CD8-positive, alpha-beta T cell (primary cell): ENCODE measurements at regions of chr16 and their contacts with region 1.

Region 1: DNA sequence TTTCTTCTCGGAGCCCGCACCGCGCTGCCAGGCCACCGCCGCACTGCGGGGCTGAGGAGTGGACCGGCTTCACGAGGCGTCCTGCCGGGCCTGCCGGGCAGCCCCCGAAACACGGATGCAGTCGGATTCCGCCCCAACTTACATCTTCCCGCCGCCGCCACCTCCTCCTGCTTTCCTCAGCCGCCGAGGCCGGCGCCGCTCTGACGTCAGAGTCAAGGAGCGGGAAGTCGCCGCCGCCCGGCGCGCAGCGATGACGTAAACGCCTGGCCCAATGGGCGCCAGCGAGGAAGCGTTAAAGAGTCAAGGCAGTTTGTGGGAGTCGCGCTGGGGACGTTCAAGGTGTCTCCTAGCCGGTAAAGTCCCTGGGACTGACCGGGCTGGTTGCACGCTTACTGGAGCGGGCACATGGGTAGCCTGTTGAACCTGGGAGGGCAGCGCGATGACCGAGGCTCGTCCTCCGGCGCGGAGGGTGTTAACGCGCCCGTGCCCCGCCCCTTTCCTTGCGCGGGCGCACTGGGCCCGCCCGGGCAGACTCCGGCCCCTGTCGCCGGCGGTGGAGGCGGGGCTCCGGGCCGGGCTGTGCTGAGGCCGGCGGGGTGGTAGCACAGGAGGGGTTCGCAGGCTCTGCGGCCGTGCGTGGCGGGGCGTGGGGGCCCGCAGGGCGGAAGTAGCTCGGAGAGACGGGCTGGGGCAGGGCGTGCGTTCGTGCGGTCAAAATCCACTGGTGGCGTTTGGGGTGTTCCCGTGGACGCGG is at the start of gene RNPS1:
- DNase-seq: peak; percentile 90 to 99 (median 97)
- ATAC-seq: peak; percentile 81
- H3K4me3 ChIP-seq: peak within 1 kb of the TSS; percentile 94 to 100
- H3K4me3 Mint-ChIP-seq: peak within 1 kb of the TSS; percentile 96
- H3K27ac ChIP-seq: peak within 1 kb of the TSS; percentile 96 to 99
- H3K27ac Mint-ChIP-seq: peak within 1 kb of the TSS; percentile 97
- H3K4me1 ChIP-seq: peaks cover 30% of the 10 kb centered on the region
- H3K4me1 Mint-ChIP-seq: peaks cover 34% of the 10 kb centered on the region
- H3K27me3 ChIP-seq: no peaks in the 10 kb centered on the region
- H3K27me3 Mint-ChIP-seq: no peaks in the 10 kb centered on the region
- CTCF ChIP-seq: no peak
- total RNA-seq, gene RNPS1: 239 to 246 TPM

Region 2: DNA sequence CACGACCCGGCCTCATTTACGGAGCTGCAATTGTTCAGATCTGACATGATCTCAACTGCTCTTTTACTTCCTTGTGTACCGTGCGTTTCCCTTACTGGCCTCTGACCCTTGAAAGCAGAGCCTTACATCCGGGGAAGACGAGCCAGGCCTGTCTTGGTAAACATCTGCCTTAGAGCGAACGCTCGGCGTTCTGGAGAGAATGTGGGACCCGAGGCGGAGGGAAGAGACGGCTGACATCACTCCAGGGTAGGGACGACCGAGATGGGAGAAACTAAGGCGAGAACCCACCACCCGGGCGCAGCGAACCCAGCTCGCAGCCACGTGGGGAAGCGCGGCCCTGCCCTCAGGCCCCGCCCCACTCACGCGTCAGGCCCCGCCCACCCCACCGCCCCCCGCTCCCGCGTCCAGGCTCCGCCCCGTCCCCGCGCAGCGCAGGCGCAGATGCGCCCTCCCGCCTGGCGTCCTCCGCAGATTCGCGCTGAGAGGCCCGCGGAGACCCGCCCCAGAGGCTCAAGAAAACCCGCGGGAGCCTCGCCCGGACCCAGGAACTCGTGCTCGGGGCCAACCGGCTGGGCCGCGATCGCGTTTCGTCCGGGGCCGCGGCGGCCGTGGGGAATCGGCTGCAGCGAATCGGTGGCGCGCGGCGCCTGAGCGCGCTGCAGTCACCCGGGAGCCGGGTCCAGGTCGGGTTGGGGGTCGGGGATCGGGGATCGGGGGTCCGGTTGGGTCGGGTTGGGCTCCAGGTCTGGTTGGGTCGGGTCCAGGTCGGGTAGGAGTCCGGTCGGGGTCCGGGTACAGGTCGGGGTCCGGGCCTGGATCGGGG is 775.0 kb before region 1 on chr16 and contains the start of gene TELO2:
- CTCF ChIA-PET with region 1: no interaction called
- POLR2A ChIA-PET with region 1: no interaction called
- intact Hi-C with region 1: loop called in 1 of 2 experiments (anchors 5 kb)
- DNase-seq: peak; percentile 75 to 93 (median 85)
- ATAC-seq: peak; percentile 94
- H3K4me3 ChIP-seq: peak within 1 kb of the TSS; percentile 68 to 87
- H3K4me3 Mint-ChIP-seq: peak within 1 kb of the TSS; percentile 95
- H3K27ac ChIP-seq: peak within 1 kb of the TSS; percentile 93 to 96
- H3K27ac Mint-ChIP-seq: peak within 1 kb of the TSS; percentile 100
- H3K4me1 ChIP-seq: peaks cover 16% of the 10 kb centered on the region
- H3K4me1 Mint-ChIP-seq: peaks cover 11% of the 10 kb centered on the region
- H3K27me3 ChIP-seq: no peaks in the 10 kb centered on the region
- H3K27me3 Mint-ChIP-seq: no peaks in the 10 kb centered on the region
- CTCF ChIP-seq: no peak
- total RNA-seq, gene TELO2: 23.0 to 23.6 TPM

Region 3: DNA sequence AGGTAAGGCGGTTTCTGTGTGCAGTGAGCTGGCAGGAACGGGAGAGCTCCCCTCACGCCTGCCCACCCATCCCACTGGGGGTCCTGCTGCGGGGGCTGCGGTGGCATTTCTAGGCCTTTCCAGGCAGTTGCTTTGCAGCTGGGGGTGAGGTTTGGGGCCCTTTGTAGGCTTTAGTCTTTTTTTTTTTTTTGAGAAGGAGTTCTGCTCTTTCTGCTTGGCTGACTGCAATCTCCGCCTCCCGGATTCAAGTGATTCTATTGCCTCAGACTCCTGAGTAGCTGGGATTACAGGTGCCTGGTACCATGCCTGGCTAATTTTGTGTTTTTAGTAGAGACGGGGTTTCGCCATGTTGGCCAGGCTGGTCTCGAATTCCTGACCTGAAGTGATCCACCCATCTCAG is 209.2 kb before region 1 on chr16:
- CTCF ChIA-PET with region 1: no interaction called
- POLR2A ChIA-PET with region 1: no interaction called
- intact Hi-C with region 1: no loop called
- DNase-seq: no peak
- ATAC-seq: no peak
- H3K4me3 ChIP-seq: no peak overlapping the region
- H3K4me3 Mint-ChIP-seq: no peak overlapping the region
- H3K27ac ChIP-seq: no peak overlapping the region
- H3K27ac Mint-ChIP-seq: no peak overlapping the region
- H3K4me1 ChIP-seq: no peaks in the 10 kb centered on the region
- H3K4me1 Mint-ChIP-seq: no peaks in the 10 kb centered on the region
- H3K27me3 ChIP-seq: no peaks in the 10 kb centered on the region
- H3K27me3 Mint-ChIP-seq: no peaks in the 10 kb centered on the region
- CTCF ChIP-seq: no peak

Region 4: DNA sequence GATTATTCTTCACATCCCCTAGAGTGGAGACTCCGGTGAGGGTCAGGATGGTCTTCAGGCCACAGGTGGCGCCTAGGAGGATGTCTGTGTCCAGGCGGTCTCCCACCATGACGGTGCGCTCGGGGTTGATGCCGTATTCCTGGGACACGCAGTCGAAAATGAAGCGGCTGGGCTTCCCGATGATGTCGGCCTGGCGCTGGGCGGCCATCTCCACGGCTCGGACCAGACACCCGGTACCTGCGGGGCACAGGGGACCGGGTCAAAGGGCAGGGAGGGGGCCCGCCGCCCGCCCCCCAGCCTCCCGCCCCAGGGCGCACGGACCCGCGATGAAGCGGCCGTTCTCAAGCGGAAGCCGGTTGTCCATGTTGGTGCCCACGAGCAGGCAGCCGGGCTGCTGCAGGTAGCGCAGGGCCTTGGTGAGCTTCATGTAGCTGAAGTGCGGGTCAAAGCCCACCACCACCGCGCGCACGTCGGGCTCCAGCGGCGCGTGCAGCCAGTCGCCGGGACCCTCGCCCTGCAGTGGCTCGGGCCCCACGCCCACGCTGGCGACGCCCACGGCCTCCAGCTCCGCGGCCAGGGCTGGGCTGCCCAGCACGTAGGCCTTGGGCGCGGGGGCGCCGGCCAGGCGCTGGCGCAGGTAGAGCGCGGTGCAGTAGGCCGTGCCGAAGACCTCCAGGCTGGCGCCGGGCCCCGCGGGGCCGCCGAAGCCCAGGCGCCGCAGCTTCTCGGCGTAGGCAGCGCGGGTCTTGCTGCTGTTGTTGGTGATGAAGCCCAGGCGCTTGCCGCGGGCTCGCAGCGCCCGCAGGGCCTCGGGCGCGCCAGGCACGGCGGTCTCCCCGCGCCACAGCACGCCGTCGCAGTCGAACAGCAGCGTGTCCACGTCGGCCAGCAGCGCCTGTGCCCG is 54.0 kb before region 1 on chr16:
- CTCF ChIA-PET with region 1: no interaction called
- POLR2A ChIA-PET with region 1: no interaction called
- intact Hi-C with region 1: loop called in 1 of 2 experiments (anchors 2 kb)
- DNase-seq: no peak
- ATAC-seq: no peak
- H3K4me3 ChIP-seq: peak overlapping the region; percentile 24 to 70
- H3K4me3 Mint-ChIP-seq: peak overlapping the region; percentile 78
- H3K27ac ChIP-seq: peak overlapping the region in 1 of 2 experiments; percentile 47
- H3K27ac Mint-ChIP-seq: no peak overlapping the region
- H3K4me1 ChIP-seq: peaks cover 14% of the 10 kb centered on the region
- H3K4me1 Mint-ChIP-seq: peaks cover 13% of the 10 kb centered on the region
- H3K27me3 ChIP-seq: no peaks in the 10 kb centered on the region
- H3K27me3 Mint-ChIP-seq: no peaks in the 10 kb centered on the region
- CTCF ChIP-seq: no peak

Region 5: GRCh38 chr16:2223375-2224182 is 44.5 kb before region 1 on chr16 and contains the start of gene E4F1:
- CTCF ChIA-PET with region 1: no interaction called
- POLR2A ChIA-PET with region 1: no interaction called
- intact Hi-C with region 1: loop called (anchors 1 kb)
- DNase-seq: peak; percentile 97 to 100 (median 99)
- ATAC-seq: peak; percentile 96
- H3K4me3 ChIP-seq: peak within 1 kb of the TSS; percentile 81 to 88
- H3K4me3 Mint-ChIP-seq: peak within 1 kb of the TSS; percentile 94
- H3K27ac ChIP-seq: peak within 1 kb of the TSS; percentile 67 to 76
- H3K27ac Mint-ChIP-seq: peak within 1 kb of the TSS; percentile 85
- H3K4me1 ChIP-seq: peaks cover 13% of the 10 kb centered on the region
- H3K4me1 Mint-ChIP-seq: peaks cover 22% of the 10 kb centered on the region
- H3K27me3 ChIP-seq: no peaks in the 10 kb centered on the region
- H3K27me3 Mint-ChIP-seq: no peaks in the 10 kb centered on the region
- CTCF ChIP-seq: no peak
- total RNA-seq, gene E4F1: 36.3 to 37.5 TPM

Region 6: GRCh38 chr16:2251483-2252240 is 16.4 kb before region 1 on chr16 and contains the start of gene ECI1:
- CTCF ChIA-PET with region 1: interaction called, 4 read pairs
- POLR2A ChIA-PET with region 1: interaction called, 10 read pairs
- intact Hi-C with region 1: loop called (anchors 1 kb)
- DNase-seq: peak; percentile 50 to 89 (median 80)
- ATAC-seq: peak; percentile 70
- H3K4me3 ChIP-seq: peak within 1 kb of the TSS; percentile 57 to 64
- H3K4me3 Mint-ChIP-seq: peak within 1 kb of the TSS; percentile 85
- H3K27ac ChIP-seq: peak within 1 kb of the TSS; percentile 64 to 81
- H3K27ac Mint-ChIP-seq: peak within 1 kb of the TSS; percentile 90
- H3K4me1 ChIP-seq: peaks cover 8% of the 10 kb centered on the region
- H3K4me1 Mint-ChIP-seq: peaks cover 10% of the 10 kb centered on the region
- H3K27me3 ChIP-seq: no peaks in the 10 kb centered on the region
- H3K27me3 Mint-ChIP-seq: no peaks in the 10 kb centered on the region
- CTCF ChIP-seq: no peak
- total RNA-seq, gene ECI1: 10.6 to 11.0 TPM

Region 7: DNA sequence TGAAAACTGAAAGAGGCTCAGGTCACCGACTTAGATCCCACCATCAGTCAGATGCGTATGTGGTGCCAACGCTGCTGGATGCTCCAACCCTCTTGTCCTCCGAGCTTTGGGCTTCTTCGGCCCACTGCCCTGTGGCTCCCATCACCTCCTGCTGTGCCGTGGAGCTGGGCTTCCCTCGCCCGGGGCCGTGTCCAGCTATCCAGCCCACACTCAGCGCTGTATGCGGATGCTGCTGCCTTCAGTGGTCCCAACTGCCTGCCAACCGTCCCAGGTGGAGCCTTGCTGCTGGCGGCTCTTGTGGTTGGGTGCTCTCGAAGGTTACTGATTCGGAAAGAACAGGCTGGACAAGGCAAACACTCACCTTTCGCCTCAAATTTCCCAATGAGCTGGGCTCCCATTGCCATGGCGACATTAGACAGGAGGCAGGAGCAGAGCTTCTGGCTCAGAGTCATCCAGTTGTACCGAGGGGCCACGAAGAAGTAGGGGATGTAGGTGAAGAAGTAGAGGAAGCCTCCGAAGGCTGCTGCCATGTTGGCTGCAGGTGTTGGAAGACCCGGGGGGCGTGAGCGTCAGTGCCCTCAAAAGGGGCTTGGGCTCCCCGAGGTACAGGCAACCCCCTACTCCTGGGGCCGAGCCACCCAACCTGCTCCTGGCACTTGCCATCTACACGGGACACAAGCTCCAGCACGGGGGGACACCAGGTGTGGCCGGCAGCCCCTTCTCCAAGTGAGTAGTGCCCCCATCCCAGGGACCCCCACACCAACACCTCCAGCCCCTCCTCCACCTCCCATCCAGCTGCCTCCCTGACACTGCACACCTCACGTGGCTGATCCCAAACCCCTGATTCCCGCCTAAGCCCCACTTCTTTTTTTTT is 40.2 kb after region 1 on chr16:
- CTCF ChIA-PET with region 1: no interaction called
- POLR2A ChIA-PET with region 1: no interaction called
- intact Hi-C with region 1: no loop called
- DNase-seq: no peak
- ATAC-seq: no peak
- H3K4me3 ChIP-seq: no peak overlapping the region
- H3K4me3 Mint-ChIP-seq: no peak overlapping the region
- H3K27ac ChIP-seq: no peak overlapping the region
- H3K27ac Mint-ChIP-seq: no peak overlapping the region
- H3K4me1 ChIP-seq: no peaks in the 10 kb centered on the region
- H3K4me1 Mint-ChIP-seq: no peaks in the 10 kb centered on the region
- H3K27me3 ChIP-seq: no peaks in the 10 kb centered on the region
- H3K27me3 Mint-ChIP-seq: no peaks in the 10 kb centered on the region
- CTCF ChIP-seq: no peak

Region 8: DNA sequence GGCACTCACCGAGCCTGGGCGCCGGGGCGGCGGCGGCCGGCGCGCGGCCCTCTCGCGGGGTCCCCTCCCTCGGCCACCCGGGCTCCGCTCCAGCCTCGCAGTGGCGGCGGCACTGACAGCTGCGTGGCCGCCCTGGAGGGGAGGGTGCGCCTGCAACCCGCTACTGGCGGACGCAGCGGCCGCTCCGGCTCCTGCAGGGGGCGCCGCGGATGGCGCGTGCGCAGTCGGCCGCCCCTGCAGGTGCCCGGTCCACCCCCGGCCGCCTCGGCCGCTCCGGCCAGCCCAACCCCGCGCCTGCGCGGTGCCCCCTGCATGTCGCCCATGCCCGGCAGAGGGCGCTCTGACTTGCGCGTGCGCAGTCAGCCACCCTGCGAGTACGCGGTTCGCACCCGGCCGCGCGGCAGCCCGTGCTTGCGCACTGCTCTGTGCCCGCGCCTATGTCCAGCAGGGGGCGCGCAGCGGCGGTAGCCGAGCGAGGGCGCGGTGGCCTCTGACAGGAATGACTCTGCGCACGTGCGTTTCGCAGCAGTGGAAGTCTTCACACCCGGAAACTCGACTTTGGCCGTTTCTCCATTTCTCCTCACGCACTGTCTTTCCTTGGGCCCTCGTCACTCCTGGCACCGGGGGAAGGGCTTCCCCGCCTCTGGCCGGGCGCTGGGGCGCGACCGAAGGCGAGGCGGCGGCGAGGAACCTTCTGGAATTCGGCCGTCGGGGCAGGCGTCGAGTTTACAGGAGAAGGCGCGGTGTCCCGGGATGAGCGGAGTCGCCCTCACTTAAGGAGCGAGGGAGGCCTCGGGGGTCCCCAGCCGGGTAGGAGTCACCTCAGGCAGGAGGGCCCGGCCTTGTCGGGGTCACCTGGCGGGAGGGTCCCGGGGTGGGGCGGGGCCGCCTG is 72.7 kb after region 1 on chr16 and contains the start of gene ABCA3:
- CTCF ChIA-PET with region 1: no interaction called
- POLR2A ChIA-PET with region 1: no interaction called
- intact Hi-C with region 1: loop called in 1 of 2 experiments (anchors 1 kb)
- DNase-seq: peak; percentile 87 to 98 (median 93)
- ATAC-seq: peak; percentile 89
- H3K4me3 ChIP-seq: peak within 1 kb of the TSS; percentile 59 to 62
- H3K4me3 Mint-ChIP-seq: peak within 1 kb of the TSS; percentile 85
- H3K27ac ChIP-seq: no peak within 1 kb of the TSS
- H3K27ac Mint-ChIP-seq: peak within 1 kb of the TSS; percentile 71
- H3K4me1 ChIP-seq: peaks cover 9% of the 10 kb centered on the region
- H3K4me1 Mint-ChIP-seq: peaks cover 13% of the 10 kb centered on the region
- H3K27me3 ChIP-seq: peaks cover 0 to 3% of the 10 kb centered on the region in 2 experiments
- H3K27me3 Mint-ChIP-seq: peaks cover 5% of the 10 kb centered on the region
- CTCF ChIP-seq: peak; percentile 100
- total RNA-seq, gene ABCA3: 3.7 to 4.0 TPM

Region 9: GRCh38 chr16:2500918-2501750 is 233.0 kb after region 1 on chr16:
- CTCF ChIA-PET with region 1: no interaction called
- POLR2A ChIA-PET with region 1: no interaction called
- intact Hi-C with region 1: loop called in 1 of 2 experiments (anchors 1 kb)
- DNase-seq: peak; percentile 67 to 89 (median 80)
- ATAC-seq: peak; percentile 100
- H3K4me3 ChIP-seq: no peak overlapping the region
- H3K4me3 Mint-ChIP-seq: no peak overlapping the region
- H3K27ac ChIP-seq: no peak overlapping the region
- H3K27ac Mint-ChIP-seq: no peak overlapping the region
- H3K4me1 ChIP-seq: peaks cover 6% of the 10 kb centered on the region
- H3K4me1 Mint-ChIP-seq: peaks cover 2% of the 10 kb centered on the region
- H3K27me3 ChIP-seq: no peaks in the 10 kb centered on the region
- H3K27me3 Mint-ChIP-seq: no peaks in the 10 kb centered on the region
- CTCF ChIP-seq: peak; percentile 87

Region 10: GRCh38 chr16:2911580-2912329 is 643.7 kb after region 1 on chr16 and contains the start of gene FLYWCH1:
- CTCF ChIA-PET with region 1: no interaction called
- POLR2A ChIA-PET with region 1: no interaction called
- intact Hi-C with region 1: no loop called
- DNase-seq: peak; percentile 95 to 100 (median 99)
- ATAC-seq: peak; percentile 99
- H3K4me3 ChIP-seq: peak within 1 kb of the TSS; percentile 64 to 66
- H3K4me3 Mint-ChIP-seq: peak within 1 kb of the TSS; percentile 94
- H3K27ac ChIP-seq: peak within 1 kb of the TSS; percentile 59 to 71
- H3K27ac Mint-ChIP-seq: peak within 1 kb of the TSS; percentile 87
- H3K4me1 ChIP-seq: peaks cover 12% of the 10 kb centered on the region
- H3K4me1 Mint-ChIP-seq: peaks cover 21% of the 10 kb centered on the region
- H3K27me3 ChIP-seq: peaks cover 0 to 2% of the 10 kb centered on the region in 2 experiments
- H3K27me3 Mint-ChIP-seq: no peaks in the 10 kb centered on the region
- CTCF ChIP-seq: no peak
- total RNA-seq, gene FLYWCH1: 89.1 to 92.6 TPM